ENCODE measurements at regions of chr9 and their contacts with region 1.

Region 1: DNA sequence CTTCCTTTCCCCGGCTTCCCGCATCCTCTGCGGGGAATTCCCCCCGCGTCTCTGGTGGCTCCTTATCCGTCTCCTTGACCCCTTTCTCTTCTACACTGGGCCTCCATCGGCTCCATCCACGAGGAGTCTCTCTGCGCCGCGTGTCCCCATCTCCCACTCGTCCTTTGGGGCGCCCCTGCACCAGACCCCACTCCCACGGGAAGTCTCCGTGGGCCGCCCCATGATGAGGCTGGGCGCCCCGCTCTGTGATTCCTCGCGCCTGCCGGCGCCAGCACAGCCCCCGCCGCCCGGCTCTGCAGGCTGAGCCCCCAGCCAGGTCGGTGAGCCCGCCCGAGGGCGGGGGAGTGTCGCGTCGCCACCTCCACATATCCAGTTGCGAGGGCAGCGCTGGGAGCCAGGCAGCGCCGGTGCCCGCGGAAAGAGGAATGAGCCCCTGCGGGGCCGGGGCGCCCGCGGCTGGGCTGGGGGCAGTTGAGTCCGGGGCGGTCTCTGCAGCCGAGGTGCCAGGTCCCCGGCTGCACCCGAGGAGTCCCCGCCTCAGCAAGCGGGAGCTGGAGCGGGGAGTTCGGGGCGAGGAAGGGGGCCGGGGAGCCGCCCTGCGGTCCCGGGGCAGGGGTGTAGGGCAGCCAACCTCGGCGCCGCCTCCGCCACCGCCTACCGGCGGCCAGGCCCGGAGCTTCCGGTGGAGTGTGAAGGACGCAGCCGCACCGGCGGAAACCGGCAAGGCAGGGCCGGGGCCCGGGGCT is 2.1 kb upstream of the TRAF1 start:
- DNase-seq: peak; percentile 65
- H3K4me3 ChIP-seq: peak overlapping the region; percentile 67 to 85
- H3K27ac ChIP-seq: peak overlapping the region; percentile 83 to 89
- H3K4me1 ChIP-seq: no peaks in the 10 kb centered on the region
- H3K27me3 ChIP-seq: no peaks in the 10 kb centered on the region
- CTCF ChIP-seq: peak in 1 of 4 experiments; percentile 39
- POLR2A ChIP-seq: no peak

Region 2: GRCh38 chr9:121286973-121287741 is 358.5 kb after region 1 on chr9:
- intact Hi-C with region 1: loop called (anchors 10 kb)
- DNase-seq: peak; percentile 73
- H3K4me3 ChIP-seq: no peak overlapping the region
- H3K27ac ChIP-seq: peak overlapping the region; percentile 85 to 90
- H3K4me1 ChIP-seq: peaks cover 9% of the 10 kb centered on the region
- H3K27me3 ChIP-seq: no peaks in the 10 kb centered on the region
- CTCF ChIP-seq: peak in 1 of 4 experiments; percentile 21
- POLR2A ChIP-seq: peak; percentile 26